ENCODE measurements at regions of chr15 and their contacts with region 1.

Region 1: GRCh38 chr15:70327856-70328678 is 230.3 kb upstream of the TLE3 start:
- DNase-seq: peak; percentile 23
- H3K4me3 ChIP-seq: no peak overlapping the region
- H3K27ac ChIP-seq: no peak overlapping the region
- H3K4me1 ChIP-seq: peaks cover 6% of the 10 kb centered on the region
- H3K27me3 ChIP-seq: no peaks in the 10 kb centered on the region
- CTCF ChIP-seq: no peak
- POLR2A ChIP-seq: no peak

Region 2: GRCh38 chr15:70264014-70264582 is 64.0 kb before region 1 on chr15:
- intact Hi-C with region 1: loop called (anchors 10 kb)
- DNase-seq: peak; percentile 31
- H3K4me3 ChIP-seq: no peak overlapping the region
- H3K27ac ChIP-seq: no peak overlapping the region
- H3K4me1 ChIP-seq: peaks cover 23% of the 10 kb centered on the region
- H3K27me3 ChIP-seq: no peaks in the 10 kb centered on the region
- CTCF ChIP-seq: no peak
- POLR2A ChIP-seq: no peak

Measured in testis (tissue), 5 donors.